Naive thymus-derived CD4-positive, alpha-beta T cell (primary cell): ENCODE measurements at regions of chr12 and their contacts with region 1.

Region 1: GRCh38 chr12:57005980-57006808 is at the start of gene ZBTB39:
- DNase-seq: peak; percentile 51 to 84 (median 62)
- ATAC-seq: peak; percentile 91
- H3K4me3 ChIP-seq: peak within 1 kb of the TSS; percentile 63
- H3K4me3 Mint-ChIP-seq: peak within 1 kb of the TSS; percentile 90 to 94 (median 92)
- H3K27ac ChIP-seq: peak within 1 kb of the TSS; percentile 82
- H3K27ac Mint-ChIP-seq: peak within 1 kb of the TSS; percentile 92 to 95 (median 95)
- H3K4me1 ChIP-seq: peaks cover 20 to 46% of the 10 kb centered on the region in 2 donors
- H3K4me1 Mint-ChIP-seq: peaks cover 36 to 80% (median 76%) of the 10 kb centered on the region in 7 donors
- H3K27me3 ChIP-seq: no peaks in the 10 kb centered on the region
- H3K27me3 Mint-ChIP-seq: no peaks in the 10 kb centered on the region
- total RNA-seq, gene ZBTB39: 5.8 to 12.9 (median 10.7) TPM

Region 2: GRCh38 chr12:57031138-57031725 is 25.0 kb after region 1 on chr12:
- CTCF ChIA-PET with region 1: interaction called, 110 read pairs
- POLR2A ChIA-PET with region 1: interaction called, 14 read pairs
- intact Hi-C with region 1: loop called in 1 of 2 experiments (anchors 1 kb)
- DNase-seq: peak in 6 of 9 donors; percentile 26 to 55 (median 41)
- ATAC-seq: peak; percentile 75
- H3K4me3 ChIP-seq: no peak overlapping the region
- H3K4me3 Mint-ChIP-seq: peak overlapping the region; percentile 18 to 80 (median 66)
- H3K27ac ChIP-seq: no peak overlapping the region
- H3K27ac Mint-ChIP-seq: peak overlapping the region; percentile 44 to 94 (median 69)
- H3K4me1 ChIP-seq: peaks cover 6 to 44% of the 10 kb centered on the region in 2 donors
- H3K4me1 Mint-ChIP-seq: peaks cover 26 to 70% (median 53%) of the 10 kb centered on the region in 7 donors
- H3K27me3 ChIP-seq: no peaks in the 10 kb centered on the region
- H3K27me3 Mint-ChIP-seq: no peaks in the 10 kb centered on the region

Region 3: DNA sequence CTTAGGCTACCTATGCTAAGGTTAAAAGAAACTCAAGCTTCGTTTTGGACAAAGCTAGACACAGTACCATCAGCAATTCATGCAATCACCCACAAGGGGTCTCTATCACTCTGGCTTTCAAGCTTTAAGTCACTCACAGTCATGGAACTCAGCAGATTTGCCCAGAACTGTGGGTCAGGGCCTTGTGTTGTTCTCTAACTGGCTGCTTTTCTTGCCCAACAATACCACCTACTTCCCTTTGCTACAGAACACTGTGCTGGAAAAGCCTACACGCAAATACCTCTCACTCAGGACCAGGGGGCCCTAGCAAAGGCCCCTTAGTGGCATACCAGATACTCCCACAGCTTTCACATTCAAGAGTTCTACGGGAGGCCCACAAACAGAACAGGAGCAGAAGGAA is 63.3 kb after region 1 on chr12:
- CTCF ChIA-PET with region 1: interaction called, 241 read pairs
- POLR2A ChIA-PET with region 1: interaction called, 35 read pairs
- intact Hi-C with region 1: no loop called
- DNase-seq: peak in 8 of 9 donors; percentile 42 to 79 (median 72)
- ATAC-seq: peak; percentile 100
- H3K4me3 ChIP-seq: no peak overlapping the region
- H3K4me3 Mint-ChIP-seq: peak overlapping the region in 8 of 10 donors; percentile 4 to 33 (median 20)
- H3K27ac ChIP-seq: peak overlapping the region; percentile 60
- H3K27ac Mint-ChIP-seq: peak overlapping the region; percentile 70 to 89 (median 83)
- H3K4me1 ChIP-seq: peaks cover 4 to 15% of the 10 kb centered on the region in 2 donors
- H3K4me1 Mint-ChIP-seq: peaks cover 13 to 50% (median 30%) of the 10 kb centered on the region in 7 donors
- H3K27me3 ChIP-seq: no peaks in the 10 kb centered on the region
- H3K27me3 Mint-ChIP-seq: no peaks in the 10 kb centered on the region

Region 4: GRCh38 chr12:57124259-57124877 is 118.2 kb after region 1 on chr12:
- CTCF ChIA-PET with region 1: interaction called, 12 read pairs
- POLR2A ChIA-PET with region 1: no interaction called
- intact Hi-C with region 1: loop called (anchors 1 to 5 kb)
- DNase-seq: peak; percentile 50 to 82 (median 72)
- ATAC-seq: peak; percentile 87
- H3K4me3 ChIP-seq: no peak overlapping the region
- H3K4me3 Mint-ChIP-seq: peak overlapping the region in 2 of 10 donors; percentile 20 to 24
- H3K27ac ChIP-seq: no peak overlapping the region
- H3K27ac Mint-ChIP-seq: peak overlapping the region in 2 of 9 donors; percentile 15 to 37
- H3K4me1 ChIP-seq: peaks cover 0 to 6% of the 10 kb centered on the region in 2 donors
- H3K4me1 Mint-ChIP-seq: peaks cover 2 to 16% (median 6%) of the 10 kb centered on the region in 7 donors
- H3K27me3 ChIP-seq: no peaks in the 10 kb centered on the region
- H3K27me3 Mint-ChIP-seq: peaks cover 0 to 34% (median 0%) of the 10 kb centered on the region in 5 donors

Region 5: GRCh38 chr12:57182921-57183790 is 177.0 kb after region 1 on chr12:
- CTCF ChIA-PET with region 1: no interaction called
- POLR2A ChIA-PET with region 1: no interaction called
- intact Hi-C with region 1: loop called (anchors 1 to 2 kb)
- DNase-seq: peak; percentile 54 to 85 (median 73)
- ATAC-seq: peak; percentile 95
- H3K4me3 ChIP-seq: no peak overlapping the region
- H3K4me3 Mint-ChIP-seq: no peak overlapping the region
- H3K27ac ChIP-seq: no peak overlapping the region
- H3K27ac Mint-ChIP-seq: peak overlapping the region in 1 of 9 donors; percentile 24
- H3K4me1 ChIP-seq: no peaks in the 10 kb centered on the region
- H3K4me1 Mint-ChIP-seq: peaks cover 2 to 10% (median 6%) of the 10 kb centered on the region in 7 donors
- H3K27me3 ChIP-seq: no peaks in the 10 kb centered on the region
- H3K27me3 Mint-ChIP-seq: peaks cover 0 to 2% (median 0%) of the 10 kb centered on the region in 5 donors

Region 6: DNA sequence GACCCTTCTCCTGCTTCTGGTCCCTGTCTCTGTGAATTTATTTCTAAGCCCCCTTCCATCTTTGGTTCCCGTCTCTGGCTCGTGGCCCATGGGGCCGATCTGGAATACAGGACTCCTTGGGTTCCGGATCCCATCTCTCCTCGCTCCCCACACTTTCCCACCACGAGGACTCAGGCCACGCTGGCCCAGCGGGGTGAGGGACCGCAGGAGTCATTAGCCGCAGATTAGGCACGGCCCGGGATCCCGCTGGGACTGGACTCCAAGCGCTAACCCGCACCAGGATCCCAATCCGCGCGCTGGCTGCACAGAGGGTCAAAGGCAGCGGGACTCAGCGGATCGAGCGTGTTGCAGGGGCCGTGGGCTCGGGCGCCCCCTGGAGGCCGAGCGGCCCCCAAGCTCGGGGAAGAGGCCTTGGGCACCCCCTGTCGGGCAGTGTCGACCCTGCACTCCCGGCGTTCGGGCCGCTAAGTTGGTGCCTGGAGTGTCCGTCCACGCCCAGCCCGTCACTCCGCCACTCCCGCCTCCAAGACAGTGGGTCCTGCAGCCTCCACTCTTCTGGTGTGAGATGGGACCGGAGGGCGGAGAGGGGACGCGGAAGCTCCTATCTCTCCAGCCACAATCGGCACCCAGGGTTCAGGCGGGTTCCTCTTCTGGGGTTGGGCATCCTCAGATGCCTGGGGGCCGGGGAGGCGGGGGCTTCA is 232.8 kb after region 1 on chr12:
- CTCF ChIA-PET with region 1: no interaction called
- POLR2A ChIA-PET with region 1: no interaction called
- intact Hi-C with region 1: loop called in 1 of 2 experiments (anchors 5 kb)
- DNase-seq: peak; percentile 72 to 94 (median 85)
- ATAC-seq: peak; percentile 89
- H3K4me3 ChIP-seq: peak overlapping the region; percentile 80
- H3K4me3 Mint-ChIP-seq: peak overlapping the region; percentile 87 to 99 (median 95)
- H3K27ac ChIP-seq: no peak overlapping the region
- H3K27ac Mint-ChIP-seq: peak overlapping the region in 6 of 9 donors; percentile 24 to 83 (median 64)
- H3K4me1 ChIP-seq: peaks cover 45 to 70% of the 10 kb centered on the region in 2 donors
- H3K4me1 Mint-ChIP-seq: peaks cover 52 to 82% (median 66%) of the 10 kb centered on the region in 7 donors
- H3K27me3 ChIP-seq: peaks cover 7 to 18% of the 10 kb centered on the region in 2 donors
- H3K27me3 Mint-ChIP-seq: peaks cover 48 to 72% (median 55%) of the 10 kb centered on the region in 5 donors